CD4-positive, alpha-beta T cell (primary cell): ENCODE measurements at regions of chr15 and their contacts with region 1.

Region 1: GRCh38 chr15:88638626-88639372 is at the start of gene ISG20:
- DNase-seq: peak; percentile 93 to 100 (median 96)
- ATAC-seq: peak; percentile 77
- H3K4me3 ChIP-seq: peak within 1 kb of the TSS; percentile 76
- H3K4me3 Mint-ChIP-seq: peak within 1 kb of the TSS; percentile 92
- H3K27ac ChIP-seq: peak within 1 kb of the TSS; percentile 99 to 100
- H3K27ac Mint-ChIP-seq: peak within 1 kb of the TSS; percentile 95
- H3K4me1 ChIP-seq: peaks cover 96% of the 10 kb centered on the region
- H3K4me1 Mint-ChIP-seq: peaks cover 77% of the 10 kb centered on the region
- H3K27me3 ChIP-seq: no peaks in the 10 kb centered on the region
- H3K27me3 Mint-ChIP-seq: no peaks in the 10 kb centered on the region
- CTCF ChIP-seq: peak; percentile 65
- total RNA-seq, gene ISG20: 152 to 157 TPM

Region 2: DNA sequence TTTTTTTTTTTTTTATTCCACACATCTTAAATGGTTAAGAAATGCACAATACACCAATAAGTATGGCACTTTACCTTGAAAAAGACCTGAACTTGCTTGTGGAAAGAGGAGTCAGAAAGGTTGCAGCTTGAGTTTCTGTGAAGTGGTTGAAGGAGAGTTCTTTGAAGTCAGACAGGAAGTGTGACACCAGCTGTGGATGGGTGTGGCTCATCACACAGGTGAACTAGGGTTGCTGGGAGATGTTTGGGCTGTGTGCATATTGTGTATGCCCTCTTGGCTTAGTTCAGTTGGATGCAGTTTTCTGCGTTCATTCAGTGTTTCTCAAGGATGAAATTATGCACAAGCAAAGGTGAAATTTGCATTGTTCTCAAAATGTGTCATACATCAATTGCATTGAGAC is 11.3 kb before region 1 on chr15:
- CTCF ChIA-PET with region 1: interaction called, 36 read pairs
- POLR2A ChIA-PET with region 1: interaction called, 42 read pairs
- intact Hi-C with region 1: loop called (anchors 1 kb)
- DNase-seq: peak; percentile 58 to 96 (median 72)
- ATAC-seq: peak; percentile 81
- H3K4me3 ChIP-seq: peak overlapping the region; percentile 1
- H3K4me3 Mint-ChIP-seq: peak overlapping the region; percentile 75
- H3K27ac ChIP-seq: peak overlapping the region; percentile 65 to 75
- H3K27ac Mint-ChIP-seq: peak overlapping the region; percentile 95
- H3K4me1 ChIP-seq: peaks cover 98% of the 10 kb centered on the region
- H3K4me1 Mint-ChIP-seq: peaks cover 94% of the 10 kb centered on the region
- H3K27me3 ChIP-seq: no peaks in the 10 kb centered on the region
- H3K27me3 Mint-ChIP-seq: no peaks in the 10 kb centered on the region
- CTCF ChIP-seq: no peak

Region 3: DNA sequence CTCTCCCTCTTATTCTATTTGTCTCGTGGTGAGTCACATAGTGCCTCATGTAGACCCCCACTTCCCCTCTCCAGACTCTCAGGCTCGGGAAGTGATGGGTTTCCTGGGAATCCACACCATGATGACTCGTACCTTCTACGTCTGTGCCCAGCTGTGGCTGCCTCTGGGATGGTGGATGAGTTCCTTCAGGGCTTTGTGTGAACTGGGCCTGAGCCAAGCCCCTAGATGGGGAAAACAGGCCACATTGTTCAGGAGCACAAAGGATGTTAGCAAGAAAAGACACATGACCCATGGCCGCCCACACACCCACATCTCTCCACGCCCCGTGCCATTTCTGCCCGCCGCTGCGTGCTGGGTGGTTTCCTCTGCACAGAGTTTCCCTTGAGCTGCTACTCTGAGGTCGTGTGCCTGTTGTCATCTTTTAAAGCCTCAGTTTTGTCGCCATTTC is 10.5 kb after region 1 on chr15:
- CTCF ChIA-PET with region 1: interaction called, 3 read pairs
- POLR2A ChIA-PET with region 1: interaction called, 37 read pairs
- intact Hi-C with region 1: no loop called
- DNase-seq: peak; percentile 35 to 87 (median 64)
- ATAC-seq: peak; percentile 89
- H3K4me3 ChIP-seq: peak overlapping the region; percentile 19
- H3K4me3 Mint-ChIP-seq: peak overlapping the region; percentile 82
- H3K27ac ChIP-seq: peak overlapping the region; percentile 67 to 70
- H3K27ac Mint-ChIP-seq: peak overlapping the region; percentile 95
- H3K4me1 ChIP-seq: peaks cover 97% of the 10 kb centered on the region
- H3K4me1 Mint-ChIP-seq: peaks cover 84% of the 10 kb centered on the region
- H3K27me3 ChIP-seq: no peaks in the 10 kb centered on the region
- H3K27me3 Mint-ChIP-seq: no peaks in the 10 kb centered on the region
- CTCF ChIP-seq: no peak

Region 4: GRCh38 chr15:88657326-88658069 is 18.7 kb after region 1 on chr15:
- CTCF ChIA-PET with region 1: interaction called, 12 read pairs
- POLR2A ChIA-PET with region 1: interaction called, 37 read pairs
- intact Hi-C with region 1: no loop called
- DNase-seq: peak in 2 of 14 experiments; percentile 33 to 36
- ATAC-seq: no peak
- H3K4me3 ChIP-seq: no peak overlapping the region
- H3K4me3 Mint-ChIP-seq: peak overlapping the region; percentile 45
- H3K27ac ChIP-seq: peak overlapping the region in 1 of 2 donors; percentile 51
- H3K27ac Mint-ChIP-seq: peak overlapping the region; percentile 93
- H3K4me1 ChIP-seq: peaks cover 84% of the 10 kb centered on the region
- H3K4me1 Mint-ChIP-seq: peaks cover 88% of the 10 kb centered on the region
- H3K27me3 ChIP-seq: no peaks in the 10 kb centered on the region
- H3K27me3 Mint-ChIP-seq: no peaks in the 10 kb centered on the region
- CTCF ChIP-seq: peak; percentile 15

Region 5: GRCh38 chr15:88776646-88777045 is 137.8 kb after region 1 on chr15:
- CTCF ChIA-PET with region 1: no interaction called
- POLR2A ChIA-PET with region 1: no interaction called
- intact Hi-C with region 1: no loop called
- DNase-seq: no peak
- ATAC-seq: no peak
- H3K4me3 ChIP-seq: no peak overlapping the region
- H3K4me3 Mint-ChIP-seq: no peak overlapping the region
- H3K27ac ChIP-seq: no peak overlapping the region
- H3K27ac Mint-ChIP-seq: no peak overlapping the region
- H3K4me1 ChIP-seq: no peaks in the 10 kb centered on the region
- H3K4me1 Mint-ChIP-seq: no peaks in the 10 kb centered on the region
- H3K27me3 ChIP-seq: peaks cover 0 to 3% of the 10 kb centered on the region in 2 experiments
- H3K27me3 Mint-ChIP-seq: peaks cover 35% of the 10 kb centered on the region
- CTCF ChIP-seq: no peak